T-cell (primary cell): ENCODE measurements at regions of chr1 and their contacts with region 1.

Region 1: GRCh38 chr1:110300412-110301085 is 38.6 kb upstream of the RBM15 start:
- DNase-seq: no peak
- ATAC-seq: no peak
- H3K4me3 ChIP-seq: no peak overlapping the region
- H3K4me3 Mint-ChIP-seq: no peak overlapping the region
- H3K27ac ChIP-seq: no peak overlapping the region
- H3K27ac Mint-ChIP-seq: no peak overlapping the region
- H3K4me1 ChIP-seq: no peaks in the 10 kb centered on the region
- H3K4me1 Mint-ChIP-seq: no peaks in the 10 kb centered on the region
- H3K27me3 ChIP-seq: peaks cover 0 to 5% of the 10 kb centered on the region in 2 experiments
- H3K27me3 Mint-ChIP-seq: peaks cover 0 to 9% of the 10 kb centered on the region in 2 donors

Region 2: GRCh38 chr1:110312188-110313121 is 11.9 kb after region 1 on chr1:
- CTCF ChIA-PET with region 1: interaction called in 1 of 2 experiments, 3 read pairs
- POLR2A ChIA-PET with region 1: interaction called in 1 of 2 experiments, 13 read pairs
- DNase-seq: peak; percentile 42 to 84 (median 66)
- ATAC-seq: peak; percentile 94 to 100 (median 97)
- H3K4me3 ChIP-seq: no peak overlapping the region
- H3K4me3 Mint-ChIP-seq: no peak overlapping the region
- H3K27ac ChIP-seq: no peak overlapping the region
- H3K27ac Mint-ChIP-seq: no peak overlapping the region
- H3K4me1 ChIP-seq: peaks cover 0 to 7% of the 10 kb centered on the region in 2 experiments
- H3K4me1 Mint-ChIP-seq: peaks cover 2 to 9% (median 3%) of the 10 kb centered on the region in 3 donors
- H3K27me3 ChIP-seq: no peaks in the 10 kb centered on the region
- H3K27me3 Mint-ChIP-seq: no peaks in the 10 kb centered on the region

Region 3: GRCh38 chr1:110347182-110347893 is 46.8 kb after region 1 on chr1:
- CTCF ChIA-PET with region 1: no interaction called
- POLR2A ChIA-PET with region 1: no interaction called
- DNase-seq: no peak
- ATAC-seq: no peak
- H3K4me3 ChIP-seq: no peak overlapping the region
- H3K4me3 Mint-ChIP-seq: peak overlapping the region in 1 of 3 donors; percentile 8
- H3K27ac ChIP-seq: no peak overlapping the region
- H3K27ac Mint-ChIP-seq: no peak overlapping the region
- H3K4me1 ChIP-seq: peaks cover 19 to 54% of the 10 kb centered on the region in 2 experiments
- H3K4me1 Mint-ChIP-seq: peaks cover 89 to 91% (median 91%) of the 10 kb centered on the region in 3 donors
- H3K27me3 ChIP-seq: no peaks in the 10 kb centered on the region
- H3K27me3 Mint-ChIP-seq: no peaks in the 10 kb centered on the region